CD4-positive, alpha-beta T cell (primary cell): ENCODE measurements at regions of chr19 and their contacts with region 1.

Region 1: GRCh38 chr19:11374433-11375142 is at the start of gene SWSAP1:
- DNase-seq: peak; percentile 93 to 100 (median 95)
- ATAC-seq: peak; percentile 87
- H3K4me3 ChIP-seq: peak within 1 kb of the TSS; percentile 87
- H3K4me3 Mint-ChIP-seq: no peak within 1 kb of the TSS
- H3K27ac ChIP-seq: peak within 1 kb of the TSS; percentile 97 to 99
- H3K27ac Mint-ChIP-seq: no peak within 1 kb of the TSS
- H3K4me1 ChIP-seq: peaks cover 45% of the 10 kb centered on the region
- H3K4me1 Mint-ChIP-seq: peaks cover 21% of the 10 kb centered on the region
- H3K27me3 ChIP-seq: no peaks in the 10 kb centered on the region
- H3K27me3 Mint-ChIP-seq: no peaks in the 10 kb centered on the region
- CTCF ChIP-seq: no peak
- total RNA-seq, gene SWSAP1: 2.6 to 2.7 TPM

Region 2: DNA sequence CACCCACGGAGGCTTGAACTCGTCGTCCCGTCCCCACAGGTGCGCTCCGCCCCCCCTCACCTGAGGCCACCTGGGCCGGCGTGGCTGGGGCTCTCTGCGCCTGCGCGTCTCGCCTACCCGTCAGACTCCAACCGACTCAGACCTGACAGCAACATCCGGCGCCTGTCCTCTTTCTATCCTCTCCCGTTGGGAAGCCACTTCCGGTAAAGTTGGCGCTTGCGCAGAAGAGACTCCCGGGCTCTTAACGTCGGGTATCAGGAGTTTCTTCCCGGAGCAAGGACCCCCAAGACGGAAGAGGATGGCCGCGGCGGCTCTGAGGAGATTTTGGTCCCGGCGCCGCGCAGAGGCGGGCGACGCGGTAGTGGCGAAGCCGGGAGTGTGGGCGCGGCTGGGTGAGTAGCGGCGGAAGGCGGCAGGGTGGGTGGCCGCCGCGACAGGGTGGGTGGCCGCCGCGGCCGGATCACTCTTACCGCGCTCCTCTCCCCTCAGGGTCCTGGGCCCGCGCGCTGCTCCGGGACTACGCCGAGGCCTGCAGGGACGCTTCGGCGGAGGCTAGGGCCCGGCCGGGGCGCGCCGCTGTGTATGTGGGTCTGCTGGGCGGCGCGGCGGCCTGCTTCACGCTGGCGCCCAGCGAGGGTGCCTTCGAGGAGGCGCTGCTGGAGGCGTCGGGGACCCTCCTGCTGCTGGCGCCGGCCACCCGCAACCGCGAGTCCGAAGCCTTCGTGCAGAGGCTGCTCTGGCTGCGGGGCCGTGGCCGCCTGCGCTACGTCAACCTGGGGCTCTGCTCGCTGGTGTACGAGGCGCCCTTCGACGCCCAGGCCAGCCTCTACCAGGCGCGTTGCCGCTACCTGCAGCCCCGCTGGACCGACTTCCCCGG is 445.8 kb before region 1 on chr19 and contains the starts of genes TIMM29 and YIPF2:
- CTCF ChIA-PET with region 1: no interaction called
- POLR2A ChIA-PET with region 1: no interaction called
- intact Hi-C with region 1: loop called in 1 of 2 experiments (anchors 10 kb)
- DNase-seq: peak; percentile 87 to 97 (median 92)
- ATAC-seq: peak; percentile 90
- H3K4me3 ChIP-seq: peak within 1 kb of the TSS; percentile 75
- H3K4me3 Mint-ChIP-seq: peak within 1 kb of the TSS; percentile 97
- H3K27ac ChIP-seq: peak within 1 kb of the TSS; percentile 46 to 61
- H3K27ac Mint-ChIP-seq: peak within 1 kb of the TSS; percentile 89
- H3K4me1 ChIP-seq: peaks cover 33% of the 10 kb centered on the region
- H3K4me1 Mint-ChIP-seq: peaks cover 16% of the 10 kb centered on the region
- H3K27me3 ChIP-seq: no peaks in the 10 kb centered on the region
- H3K27me3 Mint-ChIP-seq: no peaks in the 10 kb centered on the region
- CTCF ChIP-seq: no peak
- total RNA-seq, gene TIMM29: 22.6 to 24.8 TPM
- total RNA-seq, gene YIPF2: 21.1 to 21.7 TPM

Region 3: GRCh38 chr19:11339254-11340098 is 35.1 kb before region 1 on chr19 and contains the start of gene RAB3D:
- CTCF ChIA-PET with region 1: interaction called, 3 read pairs
- POLR2A ChIA-PET with region 1: interaction called, 16 read pairs
- intact Hi-C with region 1: no loop called
- DNase-seq: peak; percentile 43 to 92 (median 74)
- ATAC-seq: peak; percentile 82
- H3K4me3 ChIP-seq: peak within 1 kb of the TSS; percentile 63
- H3K4me3 Mint-ChIP-seq: peak within 1 kb of the TSS; percentile 85
- H3K27ac ChIP-seq: peak within 1 kb of the TSS in 1 of 2 donors; percentile 13
- H3K27ac Mint-ChIP-seq: peak within 1 kb of the TSS; percentile 62
- H3K4me1 ChIP-seq: peaks cover 37% of the 10 kb centered on the region
- H3K4me1 Mint-ChIP-seq: peaks cover 29% of the 10 kb centered on the region
- H3K27me3 ChIP-seq: no peaks in the 10 kb centered on the region
- H3K27me3 Mint-ChIP-seq: no peaks in the 10 kb centered on the region
- CTCF ChIP-seq: no peak
- total RNA-seq, gene RAB3D: 1.2 to 2.2 TPM

Region 4: DNA sequence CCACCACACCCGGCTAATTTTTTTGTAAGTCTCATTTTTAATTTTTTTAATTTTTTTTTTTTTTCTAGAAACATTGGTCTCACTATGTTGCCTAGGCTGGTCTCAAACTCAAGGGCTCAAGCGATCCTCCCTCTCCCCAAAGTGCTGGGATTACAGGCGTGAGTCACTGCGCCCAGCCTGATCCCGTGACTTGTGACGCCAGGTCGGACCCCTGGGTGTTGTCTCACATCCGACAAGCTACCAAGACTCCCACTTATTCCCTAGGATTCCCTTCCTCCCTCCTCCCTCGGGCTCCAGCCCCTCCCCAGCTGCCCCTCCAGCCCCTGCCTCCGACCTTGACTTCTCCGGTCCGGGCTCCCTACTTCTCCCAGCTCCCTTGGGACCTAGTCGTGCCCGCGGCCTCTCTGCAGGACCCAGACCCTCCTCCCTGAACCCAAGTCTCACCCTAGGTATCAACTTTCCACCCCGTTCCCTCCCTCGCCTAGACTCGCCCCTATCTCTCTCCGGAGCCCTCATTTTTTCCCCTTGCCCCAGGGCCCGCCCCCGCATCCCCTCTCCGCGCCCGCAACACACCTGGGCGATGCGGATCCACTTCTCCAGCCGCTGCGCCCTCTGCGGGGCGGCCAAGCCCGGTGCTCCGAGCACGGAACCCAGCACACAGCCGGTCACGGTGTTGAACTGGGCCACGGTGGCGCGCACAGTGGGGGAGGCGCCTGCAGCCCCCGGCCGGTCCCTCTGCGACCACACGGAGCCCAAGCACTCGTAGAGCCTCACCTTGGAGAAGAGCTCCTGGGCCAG is 31.5 kb after region 1 on chr19:
- CTCF ChIA-PET with region 1: no interaction called
- POLR2A ChIA-PET with region 1: interaction called, 12 read pairs
- intact Hi-C with region 1: no loop called
- DNase-seq: peak in 7 of 14 experiments; percentile 17 to 59 (median 43)
- ATAC-seq: peak; percentile 66
- H3K4me3 ChIP-seq: no peak overlapping the region
- H3K4me3 Mint-ChIP-seq: no peak overlapping the region
- H3K27ac ChIP-seq: no peak overlapping the region
- H3K27ac Mint-ChIP-seq: no peak overlapping the region
- H3K4me1 ChIP-seq: peaks cover 6% of the 10 kb centered on the region
- H3K4me1 Mint-ChIP-seq: no peaks in the 10 kb centered on the region
- H3K27me3 ChIP-seq: peaks cover 5 to 9% of the 10 kb centered on the region in 2 experiments
- H3K27me3 Mint-ChIP-seq: peaks cover 32% of the 10 kb centered on the region
- CTCF ChIP-seq: no peak

Region 5: GRCh38 chr19:11435058-11435832 is 60.7 kb after region 1 on chr19 and contains the starts of genes ODAD3 and PRKCSH:
- CTCF ChIA-PET with region 1: interaction called, 14 read pairs
- POLR2A ChIA-PET with region 1: interaction called, 40 read pairs
- intact Hi-C with region 1: loop called (anchors 1 kb)
- DNase-seq: peak; percentile 95 to 99 (median 97)
- ATAC-seq: peak; percentile 94
- H3K4me3 ChIP-seq: peak within 1 kb of the TSS; percentile 90
- H3K4me3 Mint-ChIP-seq: peak within 1 kb of the TSS; percentile 96
- H3K27ac ChIP-seq: peak within 1 kb of the TSS; percentile 58 to 83
- H3K27ac Mint-ChIP-seq: peak within 1 kb of the TSS; percentile 84
- H3K4me1 ChIP-seq: peaks cover 26% of the 10 kb centered on the region
- H3K4me1 Mint-ChIP-seq: peaks cover 21% of the 10 kb centered on the region
- H3K27me3 ChIP-seq: no peaks in the 10 kb centered on the region
- H3K27me3 Mint-ChIP-seq: no peaks in the 10 kb centered on the region
- CTCF ChIP-seq: peak; percentile 87
- total RNA-seq, gene ODAD3: not detected
- total RNA-seq, gene PRKCSH: 257 to 260 TPM

Region 6: DNA sequence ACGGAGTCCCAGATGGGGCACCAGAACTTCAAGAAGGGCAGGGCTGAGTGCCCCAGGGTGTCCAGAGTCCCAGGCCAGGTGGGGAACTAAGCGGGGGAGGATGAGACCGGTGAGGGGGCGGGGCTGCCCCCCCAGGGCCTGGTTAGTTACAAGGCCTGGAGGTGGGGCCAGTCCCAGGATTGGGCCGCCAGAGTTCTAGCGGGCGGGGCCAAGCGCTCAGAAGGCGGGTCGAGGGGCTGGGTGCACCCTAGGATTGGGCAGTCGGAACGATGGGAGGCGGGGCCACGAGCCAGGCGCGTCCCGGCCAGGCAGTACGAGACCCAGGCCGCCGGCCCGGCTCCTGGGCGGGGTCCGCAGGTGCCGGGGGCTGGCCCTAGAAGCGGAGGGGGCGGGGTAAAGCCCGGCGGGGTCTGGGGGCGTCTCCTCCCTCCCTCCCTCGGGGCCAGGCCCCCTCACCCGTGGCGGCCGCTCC is 130.5 kb after region 1 on chr19:
- CTCF ChIA-PET with region 1: no interaction called
- POLR2A ChIA-PET with region 1: interaction called, 6 read pairs
- intact Hi-C with region 1: loop called in 1 of 2 experiments (anchors 10 kb)
- DNase-seq: peak; percentile 90 to 99 (median 96)
- ATAC-seq: peak; percentile 92
- H3K4me3 ChIP-seq: peak overlapping the region; percentile 71
- H3K4me3 Mint-ChIP-seq: peak overlapping the region; percentile 89
- H3K27ac ChIP-seq: peak overlapping the region; percentile 52 to 96
- H3K27ac Mint-ChIP-seq: peak overlapping the region; percentile 95
- H3K4me1 ChIP-seq: peaks cover 20% of the 10 kb centered on the region
- H3K4me1 Mint-ChIP-seq: peaks cover 14% of the 10 kb centered on the region
- H3K27me3 ChIP-seq: no peaks in the 10 kb centered on the region
- H3K27me3 Mint-ChIP-seq: no peaks in the 10 kb centered on the region
- CTCF ChIP-seq: no peak

Region 7: GRCh38 chr19:11558881-11559828 is 184.6 kb after region 1 on chr19 and contains the start of gene ELOF1:
- CTCF ChIA-PET with region 1: no interaction called
- POLR2A ChIA-PET with region 1: interaction called, 11 read pairs
- intact Hi-C with region 1: no loop called
- DNase-seq: peak; percentile 90 to 99 (median 96)
- ATAC-seq: peak; percentile 93
- H3K4me3 ChIP-seq: peak within 1 kb of the TSS; percentile 94
- H3K4me3 Mint-ChIP-seq: peak within 1 kb of the TSS; percentile 96
- H3K27ac ChIP-seq: peak within 1 kb of the TSS; percentile 47 to 64
- H3K27ac Mint-ChIP-seq: peak within 1 kb of the TSS; percentile 79
- H3K4me1 ChIP-seq: peaks cover 40% of the 10 kb centered on the region
- H3K4me1 Mint-ChIP-seq: peaks cover 41% of the 10 kb centered on the region
- H3K27me3 ChIP-seq: no peaks in the 10 kb centered on the region
- H3K27me3 Mint-ChIP-seq: no peaks in the 10 kb centered on the region
- CTCF ChIP-seq: no peak
- total RNA-seq, gene ELOF1: 31.8 to 33.2 TPM